ENCODE measurements at regions of chr9 and their contacts with region 1.

Region 1: GRCh38 chr9:106019039-106019656 is 324.8 kb downstream of the TMEM38B start:
- DNase-seq: peak in 1 of 2 donors; percentile 34
- ATAC-seq: peak in 7 of 8 donors; percentile 72 to 95 (median 89)
- H3K4me3 ChIP-seq: no peak overlapping the region
- H3K27ac ChIP-seq: peak overlapping the region in 1 of 10 donors; percentile 22
- H3K4me1 ChIP-seq: peaks cover 0 to 11% (median 0%) of the 10 kb centered on the region in 9 donors
- H3K27me3 ChIP-seq: no peaks in the 10 kb centered on the region
- CTCF ChIP-seq: no peak

Region 2: DNA sequence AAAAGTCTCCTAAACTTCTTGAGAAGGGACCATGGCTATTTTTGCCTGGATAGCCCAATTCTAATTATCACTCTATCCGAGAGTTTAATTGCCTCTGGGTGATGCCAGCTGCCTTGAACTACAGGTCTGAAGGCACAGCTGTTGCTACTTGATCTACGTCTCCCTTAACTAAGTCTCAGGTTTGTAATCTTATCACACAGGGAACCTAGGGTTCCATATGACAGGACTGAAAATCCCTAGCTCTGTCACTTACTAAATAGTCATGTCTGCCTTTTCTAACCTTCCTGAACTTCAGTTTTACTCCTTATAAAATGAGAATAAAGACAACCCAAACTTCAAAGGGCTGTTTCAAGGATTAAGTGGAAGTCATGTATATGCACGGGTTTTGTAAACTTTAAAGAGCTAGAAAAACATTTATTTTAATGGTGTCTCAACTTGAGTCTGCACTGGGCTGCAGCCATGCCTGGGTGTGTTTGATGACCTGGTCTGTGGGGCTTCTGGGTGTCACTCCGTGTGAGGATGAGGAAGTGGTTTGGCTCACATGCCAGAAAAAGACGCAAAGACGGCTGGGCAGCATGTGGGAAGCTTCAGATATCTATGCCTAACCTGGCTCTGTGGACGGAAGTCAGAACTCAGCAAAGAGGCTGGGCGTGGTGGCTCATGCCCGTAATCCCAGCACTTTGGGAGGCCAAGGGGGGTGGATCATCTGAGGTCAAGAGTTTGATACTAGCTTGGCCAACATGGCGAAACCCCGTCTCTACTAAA is 904.0 kb before region 1 on chr9:
- intact Hi-C with region 1: loop called in 1 of 10 experiments (anchors 5 kb)
- DNase-seq: peak in 1 of 2 donors; percentile 17
- ATAC-seq: peak in 7 of 8 donors; percentile 30 to 76 (median 61)
- H3K4me3 ChIP-seq: no peak overlapping the region
- H3K27ac ChIP-seq: peak overlapping the region in 1 of 10 donors; percentile 46
- H3K4me1 ChIP-seq: peaks cover 0 to 19% (median 0%) of the 10 kb centered on the region in 9 donors
- H3K27me3 ChIP-seq: no peaks in the 10 kb centered on the region
- CTCF ChIP-seq: no peak

Region 3: DNA sequence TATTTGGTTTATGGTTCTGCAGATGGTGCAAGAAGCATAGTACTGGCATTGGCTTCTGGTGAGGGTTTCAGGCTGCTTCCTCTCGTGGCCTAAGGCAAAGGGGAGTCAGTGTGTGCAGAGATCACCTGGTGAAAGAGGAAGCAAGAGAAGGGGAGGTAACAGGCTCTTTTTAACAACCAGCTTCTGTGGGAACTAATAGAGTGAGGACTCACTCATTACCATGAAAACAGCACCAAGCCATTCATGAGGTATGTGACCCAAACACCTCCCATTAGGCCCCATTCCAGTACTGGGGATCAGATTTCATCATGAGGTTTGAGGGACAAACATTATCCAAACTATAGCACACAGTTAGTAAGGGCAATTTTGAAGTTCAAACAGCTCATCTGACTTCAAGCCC is 61.3 kb before region 1 on chr9:
- intact Hi-C with region 1: loop called in 1 of 10 experiments (anchors 10 kb)
- DNase-seq: no peak
- ATAC-seq: no peak
- H3K4me3 ChIP-seq: no peak overlapping the region
- H3K27ac ChIP-seq: no peak overlapping the region
- H3K4me1 ChIP-seq: no peaks in the 10 kb centered on the region
- H3K27me3 ChIP-seq: no peaks in the 10 kb centered on the region
- CTCF ChIP-seq: no peak

Region 4: GRCh38 chr9:105975886-105976645 is 43.1 kb before region 1 on chr9:
- intact Hi-C with region 1: no loop called
- DNase-seq: no peak
- ATAC-seq: no peak
- H3K4me3 ChIP-seq: no peak overlapping the region
- H3K27ac ChIP-seq: no peak overlapping the region
- H3K4me1 ChIP-seq: peaks cover 0 to 21% (median 8%) of the 10 kb centered on the region in 9 donors
- H3K27me3 ChIP-seq: no peaks in the 10 kb centered on the region
- CTCF ChIP-seq: no peak